Breast epithelium (tissue), 4 donors: ENCODE measurements at regions of chr6 and their contacts with region 1.

Region 1: GRCh38 chr6:49606696-49607390 is 29.8 kb downstream of the RHAG start:
- DNase-seq: no peak
- H3K4me3 ChIP-seq: no peak overlapping the region
- H3K27ac ChIP-seq: no peak overlapping the region
- H3K4me1 ChIP-seq: no peaks in the 10 kb centered on the region
- H3K27me3 ChIP-seq: no peaks in the 10 kb centered on the region
- CTCF ChIP-seq: peak; percentile 60 to 80 (median 75)
- POLR2A ChIP-seq: no peak

Region 2: DNA sequence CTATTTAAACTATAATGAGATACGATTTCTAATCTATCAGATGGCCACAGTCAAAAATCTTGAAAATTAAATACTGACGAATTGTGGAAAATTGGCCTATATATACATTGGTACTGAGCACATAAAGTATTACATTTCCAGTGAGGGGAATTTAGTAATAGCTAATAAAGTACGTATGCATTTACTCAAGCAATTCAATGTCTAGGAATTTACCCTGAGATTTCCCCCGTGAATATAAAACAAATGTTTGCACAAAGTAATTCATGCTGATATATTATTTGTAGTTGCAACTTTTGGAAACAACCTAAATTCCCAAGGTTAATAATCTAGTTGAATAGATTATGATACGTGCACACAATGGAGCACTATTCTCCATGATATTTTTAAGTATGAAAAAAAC is 71.0 kb before region 1 on chr6:
- intact Hi-C with region 1: loop called (anchors 5 kb)
- DNase-seq: no peak
- H3K4me3 ChIP-seq: no peak overlapping the region
- H3K27ac ChIP-seq: no peak overlapping the region
- H3K4me1 ChIP-seq: no peaks in the 10 kb centered on the region
- H3K27me3 ChIP-seq: no peaks in the 10 kb centered on the region
- CTCF ChIP-seq: no peak
- POLR2A ChIP-seq: no peak

Region 3: GRCh38 chr6:49565855-49566254 is 41.0 kb before region 1 on chr6:
- intact Hi-C with region 1: loop called (anchors 2 kb)
- DNase-seq: no peak
- H3K4me3 ChIP-seq: no peak overlapping the region
- H3K27ac ChIP-seq: peak overlapping the region in 1 of 2 donors; percentile 52
- H3K4me1 ChIP-seq: no peaks in the 10 kb centered on the region
- H3K27me3 ChIP-seq: no peaks in the 10 kb centered on the region
- CTCF ChIP-seq: no peak
- POLR2A ChIP-seq: no peak

Region 4: DNA sequence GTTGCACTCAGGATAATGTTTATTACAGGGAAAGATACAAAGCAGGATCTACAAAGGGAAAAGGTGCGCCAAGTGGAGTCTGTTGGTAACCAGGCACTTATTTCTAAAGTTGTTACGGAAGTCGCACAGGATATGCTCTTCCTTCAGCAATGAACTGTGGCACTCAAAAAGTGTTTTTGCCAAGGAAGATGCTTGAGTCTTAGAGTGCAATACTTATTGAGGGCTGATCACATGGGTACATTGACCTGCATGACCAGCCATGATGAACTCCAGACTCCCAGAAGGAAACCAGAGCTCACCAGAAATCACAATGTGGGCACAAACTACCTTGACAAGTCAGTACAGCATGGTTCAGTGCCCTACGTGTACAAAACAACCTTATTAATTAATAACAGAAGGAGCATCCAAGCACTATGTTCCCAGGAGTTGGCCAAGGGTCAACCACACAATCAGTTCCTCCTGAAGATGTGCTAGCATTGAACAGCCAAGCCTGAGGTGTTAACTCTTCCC is 835.7 kb after region 1 on chr6:
- intact Hi-C with region 1: no loop called
- DNase-seq: no peak
- H3K4me3 ChIP-seq: no peak overlapping the region
- H3K27ac ChIP-seq: no peak overlapping the region
- H3K4me1 ChIP-seq: no peaks in the 10 kb centered on the region
- H3K27me3 ChIP-seq: no peaks in the 10 kb centered on the region
- CTCF ChIP-seq: no peak
- POLR2A ChIP-seq: no peak